Activated CD4-positive, alpha-beta memory T cell treated with anti-CD3 and anti-CD28 coated beads, Interleukin-2, amount 10 ng/mL, durations not matched to agents 7 days and 5 days (primary cell): ENCODE measurements at regions of chr1 and their contacts with region 1.

Region 1: GRCh38 chr1:8848663-8849386 is 29.7 kb downstream of the ENO1 start:
- DNase-seq: peak; percentile 75
- H3K4me3 Mint-ChIP-seq: no peak overlapping the region
- H3K27ac Mint-ChIP-seq: no peak overlapping the region
- H3K4me1 Mint-ChIP-seq: peaks cover 5% of the 10 kb centered on the region
- H3K27me3 Mint-ChIP-seq: peaks cover 6% of the 10 kb centered on the region

Region 2: DNA sequence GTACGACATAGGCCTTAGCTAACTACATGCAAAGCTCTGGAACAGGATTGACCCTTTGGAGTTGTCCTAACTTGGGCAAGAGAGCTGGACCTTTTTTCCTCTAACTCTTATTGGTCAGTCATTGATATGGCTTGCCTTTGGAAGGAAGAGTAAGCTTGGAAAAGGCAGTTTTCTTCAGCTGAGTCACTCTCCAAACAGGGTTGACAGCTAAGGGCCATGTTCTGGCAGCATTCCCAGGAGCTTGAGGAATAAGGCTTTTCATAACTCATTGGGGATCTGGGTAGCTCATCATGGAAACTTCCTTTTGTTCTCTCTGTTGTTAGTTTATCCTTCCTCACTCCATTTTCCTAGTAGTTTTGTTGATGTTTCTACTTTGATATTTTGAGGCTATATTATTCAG is 808.2 kb before region 1 on chr1:
- CTCF ChIA-PET with region 1: no interaction called
- POLR2A ChIA-PET with region 1: no interaction called
- DNase-seq: no peak
- H3K4me3 Mint-ChIP-seq: no peak overlapping the region
- H3K27ac Mint-ChIP-seq: no peak overlapping the region
- H3K4me1 Mint-ChIP-seq: no peaks in the 10 kb centered on the region
- H3K27me3 Mint-ChIP-seq: peaks cover 6% of the 10 kb centered on the region

Region 3: GRCh38 chr1:8560611-8561544 is 287.9 kb before region 1 on chr1:
- CTCF ChIA-PET with region 1: interaction called, 46 read pairs
- POLR2A ChIA-PET with region 1: no interaction called
- DNase-seq: peak; percentile 32
- H3K4me3 Mint-ChIP-seq: no peak overlapping the region
- H3K27ac Mint-ChIP-seq: peak overlapping the region; percentile 22
- H3K4me1 Mint-ChIP-seq: peaks cover 39% of the 10 kb centered on the region
- H3K27me3 Mint-ChIP-seq: no peaks in the 10 kb centered on the region

Region 4: GRCh38 chr1:8733466-8733865 is 115.4 kb before region 1 on chr1:
- CTCF ChIA-PET with region 1: interaction called, 54 read pairs
- POLR2A ChIA-PET with region 1: no interaction called
- DNase-seq: no peak
- H3K4me3 Mint-ChIP-seq: no peak overlapping the region
- H3K27ac Mint-ChIP-seq: no peak overlapping the region
- H3K4me1 Mint-ChIP-seq: peaks cover 2% of the 10 kb centered on the region
- H3K27me3 Mint-ChIP-seq: no peaks in the 10 kb centered on the region

Region 5: GRCh38 chr1:8794569-8794968 is 54.3 kb before region 1 on chr1:
- CTCF ChIA-PET with region 1: interaction called, 19 read pairs
- POLR2A ChIA-PET with region 1: no interaction called
- DNase-seq: no peak
- H3K4me3 Mint-ChIP-seq: no peak overlapping the region
- H3K27ac Mint-ChIP-seq: no peak overlapping the region
- H3K4me1 Mint-ChIP-seq: no peaks in the 10 kb centered on the region
- H3K27me3 Mint-ChIP-seq: no peaks in the 10 kb centered on the region

Region 6: GRCh38 chr1:8817406-8818324 is 31.2 kb before region 1 on chr1 and contains the start of gene RERE:
- CTCF ChIA-PET with region 1: interaction called, 29 read pairs
- POLR2A ChIA-PET with region 1: no interaction called
- DNase-seq: peak; percentile 97
- H3K4me3 Mint-ChIP-seq: peak within 1 kb of the TSS; percentile 82
- H3K27ac Mint-ChIP-seq: peak within 1 kb of the TSS; percentile 75
- H3K4me1 Mint-ChIP-seq: peaks cover 48% of the 10 kb centered on the region
- H3K27me3 Mint-ChIP-seq: peaks cover 7% of the 10 kb centered on the region
- total RNA-seq, gene RERE: 96.6 to 101 TPM

Region 7: DNA sequence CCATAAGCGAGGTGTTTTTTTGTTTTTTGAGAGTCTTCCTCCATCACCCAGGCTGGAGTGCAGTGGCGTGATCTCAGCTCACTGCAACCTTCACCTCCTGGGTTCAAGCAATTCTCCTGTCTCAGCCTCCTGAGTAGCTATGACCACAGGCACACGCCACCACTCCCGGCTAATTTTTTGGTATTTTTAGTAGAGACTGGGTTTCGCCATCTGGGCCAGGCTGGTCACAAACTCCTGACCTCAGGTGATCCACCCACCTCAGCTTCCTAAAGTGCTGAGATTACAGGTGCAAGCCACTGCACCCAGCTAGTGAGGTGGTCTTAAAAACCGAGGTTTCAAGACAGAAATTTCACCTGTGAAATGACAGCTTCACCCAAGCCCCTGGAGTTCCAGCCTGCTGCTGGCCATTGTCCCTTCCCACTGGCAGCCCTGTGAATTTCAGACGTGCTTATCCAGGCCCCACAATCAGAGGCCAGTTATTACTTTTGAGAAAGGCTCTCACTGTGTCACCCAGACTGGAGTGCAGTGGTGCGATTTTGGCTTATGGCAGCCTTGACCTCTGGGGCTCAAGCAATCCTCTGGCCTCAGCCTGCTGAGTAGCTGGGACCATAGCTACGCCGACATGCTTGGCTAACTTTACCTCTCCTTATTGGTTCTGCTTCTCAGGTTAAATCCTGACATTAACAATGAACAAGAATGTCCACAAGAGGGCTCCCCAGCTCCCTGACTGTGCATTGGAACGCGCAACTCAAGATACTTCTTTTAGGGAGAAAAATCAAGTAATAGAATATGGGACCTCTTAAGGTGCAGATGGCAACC is 10.3 kb after region 1 on chr1:
- CTCF ChIA-PET with region 1: interaction called, 58 read pairs
- POLR2A ChIA-PET with region 1: interaction called, 17 read pairs
- DNase-seq: peak; percentile 54
- H3K4me3 Mint-ChIP-seq: no peak overlapping the region
- H3K27ac Mint-ChIP-seq: peak overlapping the region; percentile 77
- H3K4me1 Mint-ChIP-seq: peaks cover 56% of the 10 kb centered on the region
- H3K27me3 Mint-ChIP-seq: no peaks in the 10 kb centered on the region